ENCODE measurements at regions of chr7 and their contacts with region 1.

Region 1: DNA sequence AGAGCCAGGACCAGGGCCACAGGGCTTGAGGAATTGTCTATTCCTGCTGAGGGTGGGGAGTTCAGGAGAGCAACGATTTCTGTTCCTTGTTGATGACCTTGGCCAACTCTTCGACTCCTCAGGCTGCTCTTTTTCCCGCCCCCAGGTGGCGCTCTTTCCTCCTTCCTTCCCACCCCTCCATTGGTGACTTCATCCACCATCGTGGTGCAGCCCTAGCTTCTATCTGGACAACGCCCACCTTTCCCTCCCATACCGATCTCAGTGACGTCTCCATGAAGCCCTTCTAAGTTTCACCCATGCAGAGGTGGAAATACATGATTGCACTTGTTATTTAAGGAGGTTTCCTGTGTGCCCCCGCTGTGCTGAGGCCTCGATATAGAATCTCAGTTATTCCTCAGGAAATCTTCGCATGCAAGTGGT is 22.1 kb upstream of the CARD11 start:
- DNase-seq: peak; percentile 81
- H3K4me3 Mint-ChIP-seq: peak overlapping the region; percentile 7
- H3K27ac Mint-ChIP-seq: peak overlapping the region; percentile 53
- H3K4me1 Mint-ChIP-seq: peaks cover 88% of the 10 kb centered on the region
- H3K27me3 Mint-ChIP-seq: no peaks in the 10 kb centered on the region

Region 2: DNA sequence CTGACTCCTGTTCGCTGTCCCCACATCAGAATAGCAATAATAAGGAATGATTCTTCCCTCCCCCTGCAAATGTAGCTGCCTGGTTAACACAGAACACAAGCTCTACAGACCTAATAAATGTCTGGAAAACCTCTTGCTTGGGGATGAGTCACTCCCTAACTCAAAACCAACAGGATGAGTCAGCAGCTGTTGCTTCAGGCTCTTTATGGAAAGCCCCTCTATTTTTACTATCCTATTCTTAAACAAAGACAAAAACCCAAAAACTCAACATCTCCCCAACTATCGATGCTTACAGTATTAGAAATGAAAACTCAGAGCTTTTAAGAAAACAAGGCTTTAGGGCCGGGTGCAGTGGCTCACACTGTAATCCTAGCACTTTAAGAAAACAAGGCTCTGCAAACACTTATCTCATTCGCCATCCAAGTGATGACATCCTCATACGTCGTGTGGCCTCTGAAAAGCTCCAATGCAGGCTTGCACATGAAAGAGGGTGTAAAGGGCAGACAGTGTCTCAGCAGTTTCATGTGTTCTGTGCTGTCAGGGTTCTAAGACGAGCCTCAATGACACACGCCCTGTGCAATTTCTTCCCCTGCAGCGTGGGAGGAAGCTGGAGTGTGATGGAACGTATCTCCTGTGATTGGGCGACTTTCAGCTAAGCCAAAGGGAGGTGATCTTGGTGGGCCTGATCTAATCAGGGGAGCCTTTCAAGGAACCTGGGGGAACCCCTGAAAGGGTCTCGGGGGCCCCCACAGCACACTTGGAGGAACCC is 307.6 kb before region 1 on chr7:
- CTCF ChIA-PET with region 1: no interaction called
- POLR2A ChIA-PET with region 1: no interaction called
- DNase-seq: peak; percentile 79
- H3K4me3 Mint-ChIP-seq: peak overlapping the region; percentile 31
- H3K27ac Mint-ChIP-seq: peak overlapping the region; percentile 87
- H3K4me1 Mint-ChIP-seq: peaks cover 41% of the 10 kb centered on the region
- H3K27me3 Mint-ChIP-seq: no peaks in the 10 kb centered on the region

Region 3: GRCh38 chr7:2824678-2825461 is 240.9 kb before region 1 on chr7:
- CTCF ChIA-PET with region 1: no interaction called
- POLR2A ChIA-PET with region 1: no interaction called
- DNase-seq: no peak
- H3K4me3 Mint-ChIP-seq: no peak overlapping the region
- H3K27ac Mint-ChIP-seq: no peak overlapping the region
- H3K4me1 Mint-ChIP-seq: peaks cover 14% of the 10 kb centered on the region
- H3K27me3 Mint-ChIP-seq: no peaks in the 10 kb centered on the region

Region 4: DNA sequence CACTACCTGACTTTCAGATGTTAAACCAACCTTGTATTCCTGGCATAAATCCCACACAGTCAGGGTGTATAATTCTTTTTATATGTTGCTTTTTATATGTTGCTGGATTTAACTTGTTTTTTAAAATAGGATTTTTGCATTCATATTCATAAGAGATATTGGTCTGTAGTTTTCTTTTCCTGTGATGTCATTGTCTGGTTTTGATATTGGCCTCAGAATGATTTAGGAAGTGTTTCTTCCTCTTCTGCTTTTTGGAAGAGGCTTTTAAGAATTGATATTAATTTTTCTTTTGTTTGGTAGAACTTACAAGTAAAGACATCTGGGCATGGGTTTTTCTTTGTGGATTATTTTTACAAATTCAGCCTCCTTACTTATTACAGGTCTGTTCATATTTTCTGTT is 115.2 kb before region 1 on chr7:
- CTCF ChIA-PET with region 1: no interaction called
- POLR2A ChIA-PET with region 1: no interaction called
- DNase-seq: no peak
- H3K4me3 Mint-ChIP-seq: no peak overlapping the region
- H3K27ac Mint-ChIP-seq: no peak overlapping the region
- H3K4me1 Mint-ChIP-seq: peaks cover 62% of the 10 kb centered on the region
- H3K27me3 Mint-ChIP-seq: no peaks in the 10 kb centered on the region

Region 5: GRCh38 chr7:3042861-3043489 is 22.8 kb before region 1 on chr7:
- CTCF ChIA-PET with region 1: interaction called, 11 read pairs
- POLR2A ChIA-PET with region 1: interaction called, 21 read pairs
- DNase-seq: peak; percentile 82
- H3K4me3 Mint-ChIP-seq: peak overlapping the region; percentile 98
- H3K27ac Mint-ChIP-seq: peak overlapping the region; percentile 94
- H3K4me1 Mint-ChIP-seq: peaks cover 57% of the 10 kb centered on the region
- H3K27me3 Mint-ChIP-seq: no peaks in the 10 kb centered on the region

Region 6: DNA sequence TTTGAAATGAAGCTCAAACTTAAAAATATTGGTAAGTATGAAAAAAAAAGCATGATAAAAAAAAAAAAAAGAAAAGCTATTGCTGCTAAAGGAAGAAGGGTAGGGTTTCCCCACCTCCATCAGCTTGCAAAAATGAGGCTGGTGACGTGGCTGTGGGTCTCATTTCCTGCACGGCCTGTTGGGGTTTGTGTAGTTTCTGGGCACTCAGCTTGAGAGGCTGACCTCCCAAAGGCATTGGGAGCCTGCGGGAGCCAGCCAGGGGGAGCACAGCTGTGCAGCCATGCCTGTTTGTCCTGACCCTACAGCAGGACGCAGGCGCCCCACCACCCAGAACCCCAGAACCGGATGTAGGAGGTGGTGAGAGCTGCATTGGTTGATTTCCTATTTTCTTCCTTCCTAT is 26.7 kb after region 1 on chr7:
- CTCF ChIA-PET with region 1: interaction called, 126 read pairs
- POLR2A ChIA-PET with region 1: interaction called, 65 read pairs
- DNase-seq: peak; percentile 89
- H3K4me3 Mint-ChIP-seq: peak overlapping the region; percentile 36
- H3K27ac Mint-ChIP-seq: peak overlapping the region; percentile 96
- H3K4me1 Mint-ChIP-seq: peaks cover 72% of the 10 kb centered on the region
- H3K27me3 Mint-ChIP-seq: no peaks in the 10 kb centered on the region

Region 7: DNA sequence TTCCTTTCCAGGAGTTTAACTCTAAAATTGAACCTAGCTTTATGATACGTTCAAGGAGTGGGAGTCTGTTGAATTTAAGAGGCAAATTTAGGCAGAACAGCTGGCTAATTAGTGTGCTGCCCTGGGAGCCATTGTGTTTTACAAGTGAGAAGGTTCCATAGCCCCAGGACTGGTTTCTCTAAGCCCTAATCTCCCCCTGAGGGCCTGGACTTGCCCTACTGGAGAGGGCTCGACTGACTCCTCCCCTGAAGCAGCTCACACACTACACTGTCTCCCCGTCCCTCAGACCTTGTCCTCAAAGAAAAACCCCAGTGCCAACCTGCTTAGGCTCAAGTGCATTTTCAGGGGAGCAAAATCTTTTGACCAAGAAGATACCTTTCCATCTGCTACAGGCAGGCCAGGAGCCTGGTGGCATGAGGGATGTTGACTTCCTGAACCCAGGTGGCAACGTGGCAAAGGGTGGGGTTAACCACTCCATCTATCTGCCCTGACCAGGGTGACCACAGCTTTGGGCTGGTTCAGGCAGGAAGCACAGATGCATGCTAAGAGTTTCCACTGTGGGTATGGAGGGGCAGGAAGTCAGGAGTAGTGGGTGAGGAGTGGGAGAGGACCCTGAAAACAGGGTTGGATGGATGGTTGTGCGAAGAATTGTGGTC is 46.9 kb after region 1 on chr7:
- CTCF ChIA-PET with region 1: interaction called, 11 read pairs
- POLR2A ChIA-PET with region 1: interaction called, 31 read pairs
- DNase-seq: peak; percentile 86
- H3K4me3 Mint-ChIP-seq: peak overlapping the region; percentile 36
- H3K27ac Mint-ChIP-seq: peak overlapping the region; percentile 89
- H3K4me1 Mint-ChIP-seq: peaks cover 94% of the 10 kb centered on the region
- H3K27me3 Mint-ChIP-seq: no peaks in the 10 kb centered on the region

Region 8: GRCh38 chr7:3154912-3155494 is 89.3 kb after region 1 on chr7:
- CTCF ChIA-PET with region 1: interaction called, 56 read pairs
- POLR2A ChIA-PET with region 1: interaction called, 3 read pairs
- DNase-seq: peak; percentile 70
- H3K4me3 Mint-ChIP-seq: no peak overlapping the region
- H3K27ac Mint-ChIP-seq: peak overlapping the region; percentile 23
- H3K4me1 Mint-ChIP-seq: peaks cover 29% of the 10 kb centered on the region
- H3K27me3 Mint-ChIP-seq: peaks cover 17% of the 10 kb centered on the region

Measured in activated CD4-positive, alpha-beta memory T cell treated with anti-CD3 and anti-CD28 coated beads, Interleukin-2, amount 10 ng/mL, durations not matched to agents 7 days and 5 days (primary cell).